Motor neuron (in vitro differentiated cells): ENCODE measurements at regions of chr2 and their contacts with region 1.

Region 1: GRCh38 chr2:16763493-16763899 is 97.9 kb upstream of the CYRIA start:
- ATAC-seq: no peak
- H3K4me3 ChIP-seq: no peak overlapping the region
- H3K27ac ChIP-seq: no peak overlapping the region
- H3K4me1 ChIP-seq: peaks cover 0 to 7% of the 10 kb centered on the region in 2 donors

Region 2: GRCh38 chr2:16568998-16569784 is 194.3 kb before region 1 on chr2:
- in situ Hi-C with region 1: no loop called
- ATAC-seq: peak in 1 of 8 experiments; percentile 68
- H3K4me3 ChIP-seq: no peak overlapping the region
- H3K27ac ChIP-seq: no peak overlapping the region
- H3K4me1 ChIP-seq: peaks cover 0 to 2% of the 10 kb centered on the region in 2 donors

Region 3: GRCh38 chr2:17672583-17673317 is 909.3 kb after region 1 on chr2:
- in situ Hi-C with region 1: loop called in 3 of 9 experiments (anchors 10 to 25 kb)
- ATAC-seq: no peak
- H3K4me3 ChIP-seq: no peak overlapping the region
- H3K27ac ChIP-seq: no peak overlapping the region
- H3K4me1 ChIP-seq: no peaks in the 10 kb centered on the region